Lower leg skin (tissue), 4 donors: ENCODE measurements at regions of chr20 and their contacts with region 1.

Region 1: GRCh38 chr20:64091770-64092169 is 7.6 kb upstream of the LKAAEAR1 start:
- DNase-seq: no peak
- H3K4me3 ChIP-seq: no peak overlapping the region
- CTCF ChIP-seq: no peak
- POLR2A ChIP-seq: no peak

Region 2: GRCh38 chr20:63819224-63819921 is 272.4 kb before region 1 on chr20:
- intact Hi-C with region 1: no loop called
- DNase-seq: no peak
- H3K4me3 ChIP-seq: no peak overlapping the region
- CTCF ChIP-seq: no peak
- POLR2A ChIP-seq: no peak

Region 3: GRCh38 chr20:64115171-64115911 is 23.6 kb after region 1 on chr20:
- intact Hi-C with region 1: loop called (anchors 1 kb)
- DNase-seq: peak in 1 of 2 donors; percentile 69
- H3K4me3 ChIP-seq: no peak overlapping the region
- CTCF ChIP-seq: no peak
- POLR2A ChIP-seq: no peak